Activated naive CD4-positive, alpha-beta T cell treated with anti-CD3 and anti-CD28 coated beads for 36 hours (primary cell): ENCODE measurements at regions of chr7 and their contacts with region 1.

Region 1: GRCh38 chr7:11170175-11170574 is 196.5 kb downstream of the PHF14 start:
- DNase-seq: no peak
- H3K4me3 Mint-ChIP-seq: no peak overlapping the region
- H3K27ac Mint-ChIP-seq: no peak overlapping the region
- H3K4me1 Mint-ChIP-seq: peaks cover 17% of the 10 kb centered on the region
- H3K27me3 Mint-ChIP-seq: no peaks in the 10 kb centered on the region

Region 2: GRCh38 chr7:11120068-11120664 is 50.0 kb before region 1 on chr7:
- CTCF ChIA-PET with region 1: no interaction called
- intact Hi-C with region 1: loop called (anchors 2 kb)
- DNase-seq: no peak
- H3K4me3 Mint-ChIP-seq: no peak overlapping the region
- H3K27ac Mint-ChIP-seq: peak overlapping the region; percentile 24
- H3K4me1 Mint-ChIP-seq: peaks cover 17% of the 10 kb centered on the region
- H3K27me3 Mint-ChIP-seq: no peaks in the 10 kb centered on the region

Region 3: GRCh38 chr7:11193131-11193811 is 23.1 kb after region 1 on chr7:
- CTCF ChIA-PET with region 1: no interaction called
- intact Hi-C with region 1: loop called (anchors 2 kb)
- DNase-seq: no peak
- H3K4me3 Mint-ChIP-seq: no peak overlapping the region
- H3K27ac Mint-ChIP-seq: no peak overlapping the region
- H3K4me1 Mint-ChIP-seq: peaks cover 10% of the 10 kb centered on the region
- H3K27me3 Mint-ChIP-seq: no peaks in the 10 kb centered on the region